ENCODE measurements at regions of chr14 and their contacts with region 1.

Region 1: DNA sequence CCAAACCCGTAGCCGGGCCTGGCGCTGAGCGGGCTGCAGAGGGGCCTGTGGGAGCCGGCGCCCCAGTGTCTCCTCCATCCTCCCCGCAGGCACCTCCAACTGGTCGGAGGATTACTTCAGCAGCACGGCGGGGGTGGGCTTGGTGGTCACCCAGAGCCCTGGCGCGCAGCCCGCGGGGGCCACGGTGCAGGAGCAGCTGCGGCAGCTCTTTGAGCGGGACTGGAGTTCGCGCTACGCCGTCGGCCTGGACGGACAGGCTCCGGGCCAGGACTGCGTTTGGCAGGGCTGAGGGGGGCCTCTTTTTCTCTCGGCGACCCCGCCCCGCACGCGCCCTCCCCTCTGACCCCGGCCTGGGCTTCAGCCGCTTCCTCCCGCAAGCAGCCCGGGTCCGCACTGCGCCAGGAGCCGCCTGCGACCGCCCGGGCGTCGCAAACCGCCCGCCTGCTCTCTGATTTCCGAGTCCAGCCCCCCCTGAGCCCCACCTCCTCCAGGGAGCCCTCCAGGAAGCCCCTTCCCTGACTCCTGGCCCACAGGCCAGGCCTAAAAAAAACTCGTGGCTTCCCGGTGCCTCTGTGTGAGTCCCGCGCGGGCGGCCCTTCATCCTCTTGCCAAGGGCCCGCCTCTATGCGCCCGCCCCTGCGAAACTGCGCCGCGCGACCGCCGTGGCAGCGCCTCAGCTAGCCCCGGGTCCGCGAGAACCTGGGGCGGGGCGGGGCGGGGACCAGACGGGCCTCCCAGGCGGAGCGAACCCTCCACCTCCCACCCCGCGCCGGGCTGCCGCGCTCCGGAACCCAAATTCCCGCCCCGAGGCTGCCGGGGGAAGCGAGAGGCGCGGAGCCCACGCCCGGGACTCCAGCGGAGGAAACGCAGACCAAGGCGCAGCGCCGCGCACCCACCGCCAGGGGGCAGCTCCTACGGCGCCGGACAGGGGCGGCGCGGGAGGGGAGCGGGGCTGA is 8.3 kb downstream of the PLD4 start:
- DNase-seq: peak; percentile 70
- ATAC-seq: peak; percentile 97
- H3K4me3 ChIP-seq: peak overlapping the region; percentile 55
- H3K27ac ChIP-seq: peak overlapping the region; percentile 16; the same call in 1 of the 2 replicates
- H3K4me1 ChIP-seq: peaks cover 2% of the 10 kb centered on the region; the same call in 1 of the 2 replicates
- H3K27me3 ChIP-seq: peaks cover 57% of the 10 kb centered on the region
- CTCF ChIP-seq: peak; percentile 72
- POLR2A ChIP-seq: no peak
- RAD21 ChIP-seq: peak; percentile 55

Region 2: GRCh38 chr14:104843442-104844305 is 89.3 kb before region 1 on chr14:
- CTCF ChIA-PET with region 1: no interaction called
- POLR2A ChIA-PET with region 1: no interaction called
- dilution Hi-C with region 1: no loop called
- in situ Hi-C with region 1: no loop called
- intact Hi-C with region 1: no loop called
- DNase-seq: no peak
- ATAC-seq: peak; percentile 66
- H3K4me3 ChIP-seq: no peak overlapping the region
- H3K27ac ChIP-seq: no peak overlapping the region
- H3K4me1 ChIP-seq: no peaks in the 10 kb centered on the region; the same call in 1 of the 2 replicates
- H3K27me3 ChIP-seq: peaks cover 58% of the 10 kb centered on the region
- CTCF ChIP-seq: no peak
- POLR2A ChIP-seq: no peak
- RAD21 ChIP-seq: no peak

Region 3: DNA sequence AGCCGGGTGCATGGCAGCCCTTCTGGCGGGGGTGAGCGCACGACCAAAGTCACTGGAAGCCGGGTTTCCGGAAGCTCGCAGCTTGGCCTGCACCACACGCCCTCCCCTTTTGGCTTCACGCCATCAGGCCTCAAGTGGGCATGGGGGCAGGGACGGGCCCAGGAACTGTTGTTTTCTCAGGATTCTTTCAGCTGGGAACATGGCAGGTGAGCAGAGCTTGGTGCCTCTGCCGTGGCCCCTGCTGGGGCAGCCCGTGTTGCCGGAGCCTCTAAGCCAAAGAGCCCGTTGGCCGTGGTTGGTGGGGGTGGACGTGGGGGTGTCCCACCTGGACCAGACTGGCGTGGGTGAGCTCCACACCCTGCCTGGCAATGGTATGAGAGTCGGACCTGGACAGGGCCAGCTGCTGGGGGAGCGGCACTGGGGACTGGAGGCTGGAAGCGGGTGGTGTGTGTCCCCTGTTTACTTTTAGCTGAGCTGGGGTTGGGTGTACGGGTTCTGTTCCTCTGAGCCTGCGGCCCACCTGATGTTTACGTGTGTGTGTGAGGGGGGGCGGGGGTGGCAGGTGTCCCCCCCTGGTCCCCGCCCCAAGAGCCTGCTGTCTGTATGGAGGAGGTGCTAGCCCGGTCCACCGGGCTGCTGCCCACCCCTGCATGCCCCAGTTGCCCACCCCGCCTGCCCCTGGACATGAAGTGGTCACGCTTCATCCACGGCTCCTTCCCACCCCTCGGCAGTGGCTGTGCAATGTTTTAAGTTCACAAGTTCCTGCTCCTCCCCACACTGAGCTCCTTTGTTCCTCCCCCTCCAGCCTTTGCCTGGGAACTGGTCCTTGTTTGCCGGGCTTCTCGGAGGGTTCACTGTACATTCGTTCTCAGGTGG is 36.9 kb before region 1 on chr14:
- CTCF ChIA-PET with region 1: interaction called, 3 read pairs
- POLR2A ChIA-PET with region 1: no interaction called
- dilution Hi-C with region 1: no loop called
- in situ Hi-C with region 1: no loop called
- intact Hi-C with region 1: loop called (anchors 2 kb)
- DNase-seq: no peak
- ATAC-seq: no peak
- H3K4me3 ChIP-seq: no peak overlapping the region
- H3K27ac ChIP-seq: no peak overlapping the region
- H3K4me1 ChIP-seq: no peaks in the 10 kb centered on the region; the same call in 1 of the 2 replicates
- H3K27me3 ChIP-seq: peaks cover 5% of the 10 kb centered on the region
- CTCF ChIP-seq: no peak
- POLR2A ChIP-seq: no peak
- RAD21 ChIP-seq: no peak

Region 4: DNA sequence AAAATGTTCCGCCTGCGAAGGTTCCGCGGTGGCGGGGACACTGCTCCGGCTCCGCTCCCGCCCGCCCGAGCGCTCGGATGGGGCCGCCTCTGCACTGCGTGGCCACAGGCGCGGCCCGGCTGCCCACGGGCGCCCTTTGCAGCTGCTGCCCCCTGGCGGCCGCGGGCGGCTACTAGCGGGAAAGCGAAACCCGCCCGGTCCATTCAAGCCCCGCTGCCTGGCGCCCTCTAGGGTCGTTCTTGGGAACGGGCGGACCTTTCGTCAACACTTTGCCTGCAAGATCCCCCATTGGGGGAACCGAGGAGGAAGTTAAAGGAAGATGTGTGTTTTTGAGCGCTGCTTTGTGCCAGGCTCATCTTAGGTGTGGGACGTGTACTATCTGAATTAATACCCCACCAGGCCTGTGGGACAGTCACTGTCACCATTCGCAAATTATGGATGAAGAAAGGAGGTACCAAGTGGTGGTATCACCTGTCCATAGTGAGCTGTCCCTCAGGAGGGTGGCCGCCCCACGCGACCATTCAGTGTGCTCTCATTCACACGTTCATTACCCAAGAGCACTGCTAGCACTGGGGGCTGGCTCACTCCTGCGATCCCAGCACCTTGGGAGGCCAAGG is 112.9 kb after region 1 on chr14:
- CTCF ChIA-PET with region 1: interaction called, 4 read pairs
- POLR2A ChIA-PET with region 1: no interaction called
- dilution Hi-C with region 1: loop called (anchors 10 kb)
- in situ Hi-C with region 1: no loop called
- intact Hi-C with region 1: loop called (anchors 1 kb)
- DNase-seq: peak; percentile 74
- ATAC-seq: peak; percentile 99
- H3K4me3 ChIP-seq: peak overlapping the region; percentile 3; the same call in 1 of the 2 replicates
- H3K27ac ChIP-seq: no peak overlapping the region
- H3K4me1 ChIP-seq: peaks cover 3% of the 10 kb centered on the region; the same call in 1 of the 2 replicates
- H3K27me3 ChIP-seq: peaks cover 10% of the 10 kb centered on the region
- CTCF ChIP-seq: peak; percentile 100
- POLR2A ChIP-seq: peak; percentile 62
- RAD21 ChIP-seq: peak; percentile 100